Caco-2 (cell line): ENCODE measurements at regions of chr10 and their contacts with region 1.

Region 1: DNA sequence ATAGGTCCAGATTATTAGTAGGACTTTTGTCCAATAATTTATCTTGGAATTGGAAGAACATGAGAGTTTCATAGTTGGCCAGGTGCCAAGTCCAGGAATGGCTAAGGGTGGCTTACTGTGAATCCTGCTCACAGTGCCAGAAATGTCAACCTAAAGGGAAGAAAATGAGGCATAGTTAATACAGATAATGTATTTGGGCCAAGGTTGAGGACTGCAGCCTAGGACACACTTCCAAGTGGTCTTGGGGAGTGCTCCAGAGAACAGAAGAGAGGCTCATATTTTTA is 78.2 kb downstream of the MAPK8 start:
- DNase-seq: no peak
- H3K4me3 ChIP-seq: no peak overlapping the region
- H3K4me3 Mint-ChIP-seq: no peak overlapping the region
- H3K27ac Mint-ChIP-seq: peak overlapping the region; percentile 90
- H3K4me1 ChIP-seq: peaks cover 57% of the 10 kb centered on the region
- H3K4me1 Mint-ChIP-seq: peaks cover 34% of the 10 kb centered on the region
- H3K27me3 ChIP-seq: no peaks in the 10 kb centered on the region
- H3K27me3 Mint-ChIP-seq: no peaks in the 10 kb centered on the region
- CTCF ChIP-seq: no peak

Region 2: DNA sequence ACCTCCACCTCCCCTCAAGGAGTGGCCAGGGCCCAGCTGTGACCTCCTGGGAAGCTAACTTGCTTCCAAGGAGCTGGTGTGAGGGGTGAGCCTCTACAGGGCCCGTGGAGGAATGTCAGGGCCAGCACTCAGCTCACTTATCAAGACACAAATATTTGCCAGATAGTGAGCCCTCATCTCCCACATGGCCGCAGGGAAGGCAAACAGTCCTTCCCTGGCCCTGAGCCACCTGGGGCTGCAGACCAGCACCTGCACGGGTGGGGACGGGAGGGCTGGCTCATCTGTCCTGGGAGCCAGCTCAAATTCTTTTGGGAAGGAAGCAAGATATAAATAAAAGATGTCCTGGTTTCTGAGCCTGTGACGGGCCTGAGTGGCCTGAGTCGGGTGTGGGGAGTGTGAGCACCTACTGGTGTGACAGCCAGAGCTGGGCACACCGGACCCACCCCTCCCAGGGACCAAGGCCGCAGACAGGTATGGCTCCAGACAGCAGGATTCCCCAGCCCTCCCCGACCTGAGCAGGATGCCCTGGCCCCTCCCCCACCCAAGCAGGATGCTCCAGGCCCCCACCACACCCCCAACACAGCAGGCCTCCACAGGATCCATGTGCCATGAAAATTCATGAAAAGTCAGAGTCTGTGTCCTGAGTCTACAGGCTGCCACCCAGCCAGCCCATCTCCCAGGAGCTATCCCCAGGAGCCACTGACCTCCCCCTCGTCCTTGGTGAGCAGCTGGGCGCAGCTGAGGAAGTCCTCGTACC is 69.8 kb after region 1 on chr10:
- CTCF ChIA-PET with region 1: interaction called, 5 read pairs
- POLR2A ChIA-PET with region 1: no interaction called
- intact Hi-C with region 1: loop called (anchors 2 kb)
- DNase-seq: peak; percentile 83 to 92
- H3K4me3 ChIP-seq: no peak overlapping the region
- H3K4me3 Mint-ChIP-seq: peak overlapping the region; percentile 42
- H3K27ac Mint-ChIP-seq: peak overlapping the region; percentile 92
- H3K4me1 ChIP-seq: peaks cover 47% of the 10 kb centered on the region
- H3K4me1 Mint-ChIP-seq: peaks cover 19% of the 10 kb centered on the region
- H3K27me3 ChIP-seq: no peaks in the 10 kb centered on the region
- H3K27me3 Mint-ChIP-seq: no peaks in the 10 kb centered on the region
- CTCF ChIP-seq: no peak